Cardiac septum (tissue), 1 donor: ENCODE measurements at regions of chr1 and their contacts with region 1.

Region 1: GRCh38 chr1:235075188-235075926 is 53.3 kb downstream of the TOMM20 start:
- DNase-seq: peak; percentile 89

Region 2: GRCh38 chr1:234825498-234826165 is 249.7 kb before region 1 on chr1:
- intact Hi-C with region 1: no loop called
- DNase-seq: no peak

Region 3: GRCh38 chr1:234862944-234863515 is 212.3 kb before region 1 on chr1:
- intact Hi-C with region 1: loop called (anchors 5 kb)
- DNase-seq: peak; percentile 87

Region 4: GRCh38 chr1:234887016-234887900 is 188.1 kb before region 1 on chr1:
- intact Hi-C with region 1: loop called (anchors 2 kb)
- DNase-seq: no peak

Region 5: DNA sequence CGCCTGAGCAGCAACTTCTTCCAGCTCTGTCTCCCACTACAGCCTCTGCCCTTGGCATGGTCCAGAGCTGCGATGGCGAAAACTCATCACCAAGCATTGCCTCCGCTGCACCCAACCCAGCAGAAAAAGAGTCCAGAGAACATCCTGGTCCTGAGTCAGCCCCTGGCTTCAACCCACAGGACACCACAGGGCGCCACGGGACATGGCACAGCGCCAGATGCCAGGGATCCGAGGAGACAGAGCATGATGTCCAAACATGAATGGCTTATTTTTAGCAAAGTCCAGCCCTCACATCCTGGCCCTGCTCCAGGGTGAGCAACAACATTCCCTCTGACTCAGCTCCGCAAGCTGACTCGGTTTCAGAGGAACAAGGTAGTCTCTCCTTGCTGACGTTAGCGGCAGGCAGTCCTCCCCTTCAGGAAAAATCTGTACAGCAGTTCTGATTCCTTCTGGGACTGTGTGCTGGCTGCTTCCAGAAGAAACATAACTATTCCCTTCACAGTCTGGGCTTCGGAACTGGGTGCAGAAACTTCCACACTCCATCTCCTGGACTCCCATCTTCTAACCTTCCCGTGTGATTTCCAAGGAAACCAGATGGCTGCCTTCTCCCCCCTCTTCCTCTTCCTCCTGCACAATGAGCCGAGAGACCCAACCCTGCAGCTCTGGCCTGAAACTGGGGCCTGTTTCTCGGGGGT is 78.0 kb before region 1 on chr1:
- intact Hi-C with region 1: loop called (anchors 2 kb)
- DNase-seq: peak; percentile 97

Region 6: DNA sequence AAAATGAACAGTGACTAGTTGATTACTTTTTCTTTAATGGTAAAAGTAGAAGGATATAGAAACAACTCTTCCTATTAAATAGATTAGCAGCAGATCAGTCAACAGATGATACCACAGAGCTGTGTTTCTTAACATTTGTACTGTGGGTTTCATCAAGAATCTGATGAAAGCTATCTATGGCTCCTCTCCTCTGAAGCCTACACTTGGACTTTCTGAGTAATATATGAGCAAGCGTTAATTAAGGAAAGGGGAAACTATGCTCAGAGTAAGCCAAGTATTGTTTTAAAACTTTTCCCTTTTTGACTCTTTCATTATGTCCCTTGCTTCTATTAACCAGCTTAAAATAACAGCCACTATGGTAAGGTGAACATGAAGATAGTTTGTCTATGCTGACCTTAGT is 241.8 kb after region 1 on chr1:
- intact Hi-C with region 1: no loop called
- DNase-seq: no peak

Region 7: GRCh38 chr1:235357485-235358378 is 282.4 kb after region 1 on chr1:
- intact Hi-C with region 1: no loop called
- DNase-seq: no peak